ENCODE measurements at regions of chr6 and their contacts with region 1.

Region 1: GRCh38 chr6:37994238-37994637 is 174.7 kb downstream of the ZFAND3 start:
- DNase-seq: no peak
- ATAC-seq: no peak
- H3K4me3 ChIP-seq: no peak overlapping the region
- H3K4me3 Mint-ChIP-seq: no peak overlapping the region
- H3K27ac ChIP-seq: no peak overlapping the region
- H3K27ac Mint-ChIP-seq: no peak overlapping the region
- H3K4me1 ChIP-seq: no peaks in the 10 kb centered on the region
- H3K4me1 Mint-ChIP-seq: peaks cover 51% of the 10 kb centered on the region
- H3K27me3 ChIP-seq: no peaks in the 10 kb centered on the region
- H3K27me3 Mint-ChIP-seq: no peaks in the 10 kb centered on the region
- CTCF ChIP-seq: no peak

Region 2: DNA sequence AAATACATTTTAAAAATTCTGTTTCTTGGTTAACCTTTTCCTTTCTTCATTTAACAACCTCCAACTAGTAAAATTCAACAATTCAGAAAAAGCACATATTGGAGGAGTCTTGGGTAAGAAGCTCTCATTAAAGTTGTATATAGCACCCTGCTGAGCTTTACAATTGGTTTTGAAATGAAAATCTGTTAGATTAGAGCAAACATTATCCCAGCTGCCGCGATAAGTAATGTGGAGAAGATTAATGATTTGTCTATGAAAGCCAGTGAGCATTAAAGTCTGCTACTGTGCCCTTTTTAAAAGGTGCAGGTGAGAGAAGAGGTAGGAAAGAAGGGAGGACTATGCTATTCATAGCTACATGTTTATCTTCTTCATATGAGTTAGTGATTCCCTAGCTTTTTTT is 26.8 kb after region 1 on chr6:
- CTCF ChIA-PET with region 1: no interaction called
- POLR2A ChIA-PET with region 1: no interaction called
- intact Hi-C with region 1: loop called in 1 of 2 experiments (anchors 1 kb)
- DNase-seq: no peak
- ATAC-seq: no peak
- H3K4me3 ChIP-seq: no peak overlapping the region
- H3K4me3 Mint-ChIP-seq: no peak overlapping the region
- H3K27ac ChIP-seq: no peak overlapping the region
- H3K27ac Mint-ChIP-seq: no peak overlapping the region
- H3K4me1 ChIP-seq: no peaks in the 10 kb centered on the region
- H3K4me1 Mint-ChIP-seq: peaks cover 45% of the 10 kb centered on the region
- H3K27me3 ChIP-seq: no peaks in the 10 kb centered on the region
- H3K27me3 Mint-ChIP-seq: no peaks in the 10 kb centered on the region
- CTCF ChIP-seq: no peak

Region 3: DNA sequence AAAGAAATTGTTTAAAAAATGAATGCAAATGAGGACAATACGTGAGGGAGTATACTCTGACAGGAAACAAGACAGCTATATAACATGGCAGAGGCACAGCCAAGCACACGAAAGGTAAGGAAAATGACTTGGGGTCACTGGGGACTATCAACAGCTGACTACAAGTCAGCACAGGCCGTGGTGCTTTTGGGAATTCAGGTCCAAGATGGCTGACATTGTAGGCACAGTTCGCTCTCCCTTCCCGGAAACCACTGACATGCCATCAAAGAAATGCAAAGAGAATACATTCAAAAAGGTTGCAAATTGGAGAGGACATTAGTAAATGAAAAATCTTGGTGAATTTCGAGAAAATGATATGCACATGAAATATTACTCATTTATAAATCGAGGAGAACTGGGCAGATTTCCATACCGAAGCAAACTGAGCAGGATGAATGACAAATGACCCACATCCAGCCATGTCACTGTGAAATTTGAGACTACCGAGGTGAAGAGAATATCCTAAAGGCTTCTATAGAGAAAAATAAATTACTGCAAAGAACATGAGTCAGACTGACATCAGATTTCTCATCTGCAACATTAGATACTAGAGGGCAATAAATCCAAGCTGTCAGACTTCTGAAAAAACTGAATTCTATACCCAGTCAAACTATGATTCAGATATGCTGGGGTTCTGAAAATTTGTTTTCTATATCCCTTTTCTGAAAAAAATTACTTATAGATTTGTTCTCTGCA is 254.4 kb after region 1 on chr6:
- CTCF ChIA-PET with region 1: no interaction called
- POLR2A ChIA-PET with region 1: no interaction called
- intact Hi-C with region 1: no loop called
- DNase-seq: no peak
- ATAC-seq: no peak
- H3K4me3 ChIP-seq: no peak overlapping the region
- H3K4me3 Mint-ChIP-seq: no peak overlapping the region
- H3K27ac ChIP-seq: no peak overlapping the region
- H3K27ac Mint-ChIP-seq: no peak overlapping the region
- H3K4me1 ChIP-seq: no peaks in the 10 kb centered on the region
- H3K4me1 Mint-ChIP-seq: no peaks in the 10 kb centered on the region
- H3K27me3 ChIP-seq: no peaks in the 10 kb centered on the region
- H3K27me3 Mint-ChIP-seq: no peaks in the 10 kb centered on the region
- CTCF ChIP-seq: no peak

Measured in CD8-positive, alpha-beta T cell (primary cell).